Testis (tissue), 5 donors: ENCODE measurements at regions of chr2 and their contacts with region 1.

Region 1: GRCh38 chr2:138455275-138456052 is 46.1 kb upstream of the SPOPL start:
- DNase-seq: no peak
- H3K4me3 ChIP-seq: no peak overlapping the region
- H3K27ac ChIP-seq: no peak overlapping the region
- H3K4me1 ChIP-seq: no peaks in the 10 kb centered on the region
- H3K27me3 ChIP-seq: no peaks in the 10 kb centered on the region
- CTCF ChIP-seq: no peak
- POLR2A ChIP-seq: no peak

Region 2: DNA sequence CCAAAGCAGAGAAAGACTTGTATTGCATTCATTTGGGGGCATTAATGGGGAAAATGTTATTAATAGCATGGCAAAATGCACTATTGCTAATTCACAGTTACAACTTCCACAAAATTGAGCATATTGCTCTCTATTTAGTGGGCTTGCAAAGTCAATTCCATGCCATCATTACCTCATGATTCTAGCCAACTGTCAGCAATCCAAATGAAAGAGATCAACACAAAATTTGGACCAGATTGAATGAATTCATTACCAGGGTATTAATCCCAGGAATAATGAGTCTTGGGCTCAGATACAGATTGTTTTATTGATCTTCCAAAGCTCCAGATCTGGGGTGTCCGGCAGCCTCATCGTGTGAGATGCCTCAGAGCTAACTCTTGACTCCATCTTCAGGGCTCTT is 286.4 kb after region 1 on chr2:
- intact Hi-C with region 1: no loop called
- DNase-seq: no peak
- H3K4me3 ChIP-seq: no peak overlapping the region
- H3K27ac ChIP-seq: no peak overlapping the region
- H3K4me1 ChIP-seq: no peaks in the 10 kb centered on the region
- H3K27me3 ChIP-seq: no peaks in the 10 kb centered on the region
- CTCF ChIP-seq: no peak
- POLR2A ChIP-seq: no peak

Region 3: GRCh38 chr2:138787053-138787666 is 331.7 kb after region 1 on chr2:
- intact Hi-C with region 1: loop called (anchors 5 kb)
- DNase-seq: peak; percentile 18
- H3K4me3 ChIP-seq: no peak overlapping the region
- H3K27ac ChIP-seq: no peak overlapping the region
- H3K4me1 ChIP-seq: no peaks in the 10 kb centered on the region
- H3K27me3 ChIP-seq: no peaks in the 10 kb centered on the region
- CTCF ChIP-seq: peak; percentile 58 to 63 (median 58)
- POLR2A ChIP-seq: no peak